ENCODE measurements at regions of chr19 and their contacts with region 1.

Region 1: GRCh38 chr19:662962-663681 is at the start of gene RNF126:
- DNase-seq: peak; percentile 86 to 90 (median 89)
- H3K4me3 ChIP-seq: peak within 1 kb of the TSS; percentile 83 to 99
- H3K4me3 Mint-ChIP-seq: peak within 1 kb of the TSS; percentile 94 to 100 (median 98)
- H3K27ac ChIP-seq: peak within 1 kb of the TSS; percentile 96
- H3K27ac Mint-ChIP-seq: peak within 1 kb of the TSS; percentile 97 to 100 (median 99)
- H3K4me1 ChIP-seq: peaks cover 46% of the 10 kb centered on the region
- H3K4me1 Mint-ChIP-seq: peaks cover 7 to 53% (median 34%) of the 10 kb centered on the region in 4 donors
- H3K27me3 ChIP-seq: no peaks in the 10 kb centered on the region
- H3K27me3 Mint-ChIP-seq: peaks cover 0 to 3% of the 10 kb centered on the region in 2 donors
- total RNA-seq, gene RNF126: 105 to 112 TPM

Region 2: DNA sequence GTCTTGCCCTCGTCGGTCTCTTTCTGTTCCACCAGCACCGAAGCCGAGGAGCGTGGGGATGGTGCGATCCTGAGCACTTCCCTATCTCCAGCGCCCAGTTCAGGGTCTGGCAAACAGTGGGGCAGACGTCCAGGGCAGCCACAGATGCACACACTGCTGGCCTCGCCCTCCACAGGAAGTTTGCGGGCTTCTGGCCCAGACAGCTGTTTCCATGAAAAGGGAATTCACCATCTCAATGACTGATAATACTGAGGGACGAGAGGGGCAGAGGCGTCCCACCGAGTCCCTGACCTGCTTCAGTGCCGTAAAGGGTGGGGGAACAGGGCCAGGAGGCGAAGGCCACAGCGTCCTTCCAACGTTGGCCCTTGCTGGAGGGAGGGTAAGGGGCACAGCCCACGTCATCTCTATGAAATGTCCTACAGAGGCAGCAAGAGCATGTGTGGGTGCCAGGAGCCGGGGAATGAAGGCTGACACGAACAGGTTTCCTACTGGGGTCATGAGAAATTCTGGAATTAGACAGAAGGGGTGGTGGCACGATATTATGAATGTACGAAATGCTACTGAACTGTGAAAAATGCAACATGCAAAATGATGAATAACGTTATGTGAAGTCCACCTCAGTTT is 221.8 kb before region 1 on chr19:
- CTCF ChIA-PET with region 1: no interaction called
- POLR2A ChIA-PET with region 1: no interaction called
- intact Hi-C with region 1: no loop called
- DNase-seq: no peak
- H3K4me3 ChIP-seq: no peak overlapping the region
- H3K4me3 Mint-ChIP-seq: no peak overlapping the region
- H3K27ac ChIP-seq: no peak overlapping the region
- H3K27ac Mint-ChIP-seq: peak overlapping the region in 1 of 7 donors; percentile 43
- H3K4me1 ChIP-seq: no peaks in the 10 kb centered on the region
- H3K4me1 Mint-ChIP-seq: no peaks in the 10 kb centered on the region
- H3K27me3 ChIP-seq: no peaks in the 10 kb centered on the region
- H3K27me3 Mint-ChIP-seq: peaks cover 14 to 23% of the 10 kb centered on the region in 2 donors

Region 3: DNA sequence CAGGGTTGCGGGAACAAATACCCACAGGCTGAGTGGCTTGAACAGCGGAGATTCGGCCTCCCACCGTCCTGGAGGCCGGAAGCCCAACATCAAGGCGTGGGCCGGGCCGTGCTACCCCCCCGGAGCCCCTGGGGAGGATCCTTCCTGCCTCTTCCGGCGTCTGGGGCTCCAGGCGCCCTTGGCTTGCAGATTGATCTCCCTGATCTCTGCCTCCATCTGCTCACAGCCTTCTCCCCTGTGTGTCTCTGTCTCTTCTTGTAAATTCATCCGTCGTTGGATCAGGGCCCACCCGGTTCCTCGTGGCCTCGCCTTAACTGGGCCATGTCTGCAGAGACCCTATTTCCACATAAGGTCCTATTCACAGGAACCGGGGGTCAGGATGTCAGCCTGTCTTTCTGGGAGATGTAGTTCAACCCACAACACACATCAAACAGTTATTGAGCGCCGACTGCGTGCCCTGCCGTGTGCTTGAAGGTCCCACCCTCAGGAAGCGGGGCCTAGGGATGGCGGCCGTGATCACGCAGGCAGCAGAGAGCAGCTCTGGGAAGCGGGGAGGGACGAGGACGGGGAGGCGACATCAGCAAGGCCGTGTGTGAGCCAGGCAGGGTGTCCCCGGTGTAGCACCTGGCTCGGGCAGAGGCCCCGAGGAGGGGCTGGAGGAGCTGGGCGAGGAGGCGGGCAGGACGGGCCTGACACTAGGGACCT is 52.2 kb before region 1 on chr19:
- CTCF ChIA-PET with region 1: no interaction called
- POLR2A ChIA-PET with region 1: interaction called, 28 read pairs
- intact Hi-C with region 1: loop called (anchors 1 kb)
- DNase-seq: peak; percentile 50 to 83 (median 69)
- H3K4me3 ChIP-seq: peak overlapping the region; percentile 39 to 71
- H3K4me3 Mint-ChIP-seq: peak overlapping the region; percentile 86 to 99 (median 94)
- H3K27ac ChIP-seq: peak overlapping the region; percentile 51
- H3K27ac Mint-ChIP-seq: peak overlapping the region; percentile 87 to 100 (median 96)
- H3K4me1 ChIP-seq: peaks cover 25% of the 10 kb centered on the region
- H3K4me1 Mint-ChIP-seq: peaks cover 9 to 41% (median 24%) of the 10 kb centered on the region in 4 donors
- H3K27me3 ChIP-seq: no peaks in the 10 kb centered on the region
- H3K27me3 Mint-ChIP-seq: peaks cover 0 to 2% of the 10 kb centered on the region in 2 donors

Region 4: GRCh38 chr19:639253-640160 is 23.6 kb before region 1 on chr19 and contains the start of gene FGF22:
- CTCF ChIA-PET with region 1: no interaction called
- POLR2A ChIA-PET with region 1: interaction called, 54 read pairs
- intact Hi-C with region 1: loop called (anchors 2 kb)
- DNase-seq: peak; percentile 91 to 95 (median 92)
- H3K4me3 ChIP-seq: peak within 1 kb of the TSS; percentile 52 to 63
- H3K4me3 Mint-ChIP-seq: peak within 1 kb of the TSS; percentile 83 to 93 (median 88)
- H3K27ac ChIP-seq: peak within 1 kb of the TSS; percentile 15
- H3K27ac Mint-ChIP-seq: peak within 1 kb of the TSS; percentile 89 to 95 (median 94)
- H3K4me1 ChIP-seq: peaks cover 12% of the 10 kb centered on the region
- H3K4me1 Mint-ChIP-seq: peaks cover 4 to 15% (median 6%) of the 10 kb centered on the region in 4 donors
- H3K27me3 ChIP-seq: no peaks in the 10 kb centered on the region
- H3K27me3 Mint-ChIP-seq: no peaks in the 10 kb centered on the region
- total RNA-seq, gene FGF22: 1.8 to 1.9 TPM

Region 5: DNA sequence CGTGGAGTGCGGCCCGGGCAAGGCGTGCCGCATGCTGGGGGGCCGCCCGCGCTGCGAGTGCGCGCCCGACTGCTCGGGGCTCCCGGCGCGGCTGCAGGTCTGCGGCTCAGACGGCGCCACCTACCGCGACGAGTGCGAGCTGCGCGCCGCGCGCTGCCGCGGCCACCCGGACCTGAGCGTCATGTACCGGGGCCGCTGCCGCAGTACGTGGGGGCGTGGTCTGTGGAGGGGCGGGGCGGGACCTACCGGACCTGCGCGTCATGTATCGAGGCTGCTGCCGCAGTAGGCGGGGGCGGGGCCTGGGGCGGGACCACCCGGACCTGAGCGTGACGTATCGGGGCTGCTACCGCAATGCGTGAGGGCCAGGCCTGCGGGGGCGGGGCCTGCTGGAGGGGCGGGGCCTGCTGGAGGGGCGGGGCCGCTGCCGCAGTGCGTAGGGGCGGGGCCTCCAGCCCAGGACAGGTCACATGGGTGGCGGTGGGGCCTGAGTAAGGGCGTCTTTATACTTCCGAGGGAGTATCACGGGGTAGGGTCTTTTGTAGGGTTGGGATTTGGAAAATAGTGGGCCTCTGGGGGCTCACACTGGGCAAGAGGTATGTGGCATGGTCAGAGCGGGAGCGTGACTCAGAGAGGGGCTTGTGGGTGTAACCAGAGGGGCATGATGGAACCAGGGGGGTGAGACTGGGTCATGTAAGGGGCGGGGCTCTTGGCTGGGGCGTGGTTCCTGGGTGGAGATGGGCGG is 17.3 kb after region 1 on chr19:
- CTCF ChIA-PET with region 1: interaction called, 8 read pairs
- POLR2A ChIA-PET with region 1: interaction called, 33 read pairs
- intact Hi-C with region 1: loop called (anchors 1 kb)
- DNase-seq: peak; percentile 96 to 100 (median 98)
- H3K4me3 ChIP-seq: peak overlapping the region; percentile 34 to 76
- H3K4me3 Mint-ChIP-seq: peak overlapping the region; percentile 89 to 98 (median 94)
- H3K27ac ChIP-seq: peak overlapping the region; percentile 58
- H3K27ac Mint-ChIP-seq: peak overlapping the region; percentile 78 to 100 (median 99)
- H3K4me1 ChIP-seq: peaks cover 13% of the 10 kb centered on the region
- H3K4me1 Mint-ChIP-seq: peaks cover 0 to 6% (median 1%) of the 10 kb centered on the region in 4 donors
- H3K27me3 ChIP-seq: peaks cover 5% of the 10 kb centered on the region
- H3K27me3 Mint-ChIP-seq: peaks cover 3 to 7% of the 10 kb centered on the region in 2 donors

Region 6: GRCh38 chr19:892243-893050 is 229.3 kb after region 1 on chr19:
- CTCF ChIA-PET with region 1: no interaction called
- POLR2A ChIA-PET with region 1: no interaction called
- intact Hi-C with region 1: loop called (anchors 1 kb)
- DNase-seq: no peak
- H3K4me3 ChIP-seq: peak overlapping the region; percentile 36 to 76
- H3K4me3 Mint-ChIP-seq: peak overlapping the region; percentile 84 to 95 (median 92)
- H3K27ac ChIP-seq: peak overlapping the region; percentile 80
- H3K27ac Mint-ChIP-seq: peak overlapping the region; percentile 38 to 100 (median 88)
- H3K4me1 ChIP-seq: peaks cover 32% of the 10 kb centered on the region
- H3K4me1 Mint-ChIP-seq: peaks cover 7 to 47% (median 11%) of the 10 kb centered on the region in 4 donors
- H3K27me3 ChIP-seq: no peaks in the 10 kb centered on the region
- H3K27me3 Mint-ChIP-seq: peaks cover 0 to 3% of the 10 kb centered on the region in 2 donors

Measured in CD4-positive, alpha-beta memory T cell (primary cell).